ENCODE measurements at regions of chr6 and their contacts with region 1.

Region 1: GRCh38 chr6:112443179-112444065 is 96.3 kb downstream of the RFPL4B start:
- DNase-seq: no peak
- H3K4me3 Mint-ChIP-seq: no peak overlapping the region
- H3K27ac Mint-ChIP-seq: no peak overlapping the region
- H3K4me1 Mint-ChIP-seq: no peaks in the 10 kb centered on the region
- H3K27me3 Mint-ChIP-seq: peaks cover 3% of the 10 kb centered on the region

Region 2: DNA sequence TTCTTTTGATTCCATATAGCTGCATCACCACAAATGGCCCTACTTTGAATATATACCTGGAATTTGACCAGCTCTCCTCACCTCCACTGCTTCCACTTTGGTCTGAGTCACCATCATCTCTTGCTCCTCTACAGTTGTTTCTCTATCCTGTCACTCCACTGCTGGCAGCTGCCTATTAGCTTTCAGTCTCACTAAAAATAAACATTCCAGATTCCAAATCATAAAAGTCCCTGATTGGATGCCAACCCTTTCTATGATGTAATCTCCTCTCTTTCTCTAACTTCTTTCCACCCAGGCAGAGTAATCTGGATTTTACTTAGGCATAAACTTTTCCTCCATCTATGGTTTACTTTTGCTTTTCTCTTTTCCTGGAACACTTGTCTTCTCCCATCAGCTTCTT is 47.2 kb before region 1 on chr6:
- CTCF ChIA-PET with region 1: no interaction called
- intact Hi-C with region 1: no loop called
- DNase-seq: no peak
- H3K4me3 Mint-ChIP-seq: no peak overlapping the region
- H3K27ac Mint-ChIP-seq: peak overlapping the region; percentile 46
- H3K4me1 Mint-ChIP-seq: no peaks in the 10 kb centered on the region
- H3K27me3 Mint-ChIP-seq: peaks cover 6% of the 10 kb centered on the region

Region 3: DNA sequence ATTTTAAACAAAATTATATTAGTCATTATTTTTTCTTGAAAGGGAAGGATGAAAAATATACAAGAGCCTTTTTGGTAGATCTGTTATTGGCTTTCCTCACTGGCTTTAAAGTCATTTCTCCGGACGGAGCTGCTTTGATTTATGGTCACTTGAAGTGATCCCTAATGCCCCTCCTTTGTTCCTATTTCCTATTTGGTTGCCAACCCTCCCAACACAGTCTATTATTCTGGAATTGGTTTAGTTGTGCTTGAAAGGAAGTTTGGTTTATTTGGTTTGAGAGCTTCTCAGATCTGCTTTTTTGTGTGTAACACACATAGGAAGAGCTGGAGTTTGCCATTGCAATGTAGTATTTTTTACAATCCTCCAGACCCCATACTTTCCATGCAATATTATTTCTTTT is 251.6 kb after region 1 on chr6:
- CTCF ChIA-PET with region 1: no interaction called
- intact Hi-C with region 1: loop called (anchors 5 kb)
- DNase-seq: no peak
- H3K4me3 Mint-ChIP-seq: no peak overlapping the region
- H3K27ac Mint-ChIP-seq: no peak overlapping the region
- H3K4me1 Mint-ChIP-seq: no peaks in the 10 kb centered on the region
- H3K27me3 Mint-ChIP-seq: no peaks in the 10 kb centered on the region